Activated T-helper 2 cell treated with anti-CD3 and anti-CD28 coated beads, Interferon-gamma antibody, Interleukin-2, Interleukin-4, amounts not matched to agents 10 μg/mL and 5 μg/mL and 100 μg/mL, durations not matched to agents 14 hours and 24 hours and 36 hours (primary cell): ENCODE measurements at regions of chr12 and their contacts with region 1.

Region 1: DNA sequence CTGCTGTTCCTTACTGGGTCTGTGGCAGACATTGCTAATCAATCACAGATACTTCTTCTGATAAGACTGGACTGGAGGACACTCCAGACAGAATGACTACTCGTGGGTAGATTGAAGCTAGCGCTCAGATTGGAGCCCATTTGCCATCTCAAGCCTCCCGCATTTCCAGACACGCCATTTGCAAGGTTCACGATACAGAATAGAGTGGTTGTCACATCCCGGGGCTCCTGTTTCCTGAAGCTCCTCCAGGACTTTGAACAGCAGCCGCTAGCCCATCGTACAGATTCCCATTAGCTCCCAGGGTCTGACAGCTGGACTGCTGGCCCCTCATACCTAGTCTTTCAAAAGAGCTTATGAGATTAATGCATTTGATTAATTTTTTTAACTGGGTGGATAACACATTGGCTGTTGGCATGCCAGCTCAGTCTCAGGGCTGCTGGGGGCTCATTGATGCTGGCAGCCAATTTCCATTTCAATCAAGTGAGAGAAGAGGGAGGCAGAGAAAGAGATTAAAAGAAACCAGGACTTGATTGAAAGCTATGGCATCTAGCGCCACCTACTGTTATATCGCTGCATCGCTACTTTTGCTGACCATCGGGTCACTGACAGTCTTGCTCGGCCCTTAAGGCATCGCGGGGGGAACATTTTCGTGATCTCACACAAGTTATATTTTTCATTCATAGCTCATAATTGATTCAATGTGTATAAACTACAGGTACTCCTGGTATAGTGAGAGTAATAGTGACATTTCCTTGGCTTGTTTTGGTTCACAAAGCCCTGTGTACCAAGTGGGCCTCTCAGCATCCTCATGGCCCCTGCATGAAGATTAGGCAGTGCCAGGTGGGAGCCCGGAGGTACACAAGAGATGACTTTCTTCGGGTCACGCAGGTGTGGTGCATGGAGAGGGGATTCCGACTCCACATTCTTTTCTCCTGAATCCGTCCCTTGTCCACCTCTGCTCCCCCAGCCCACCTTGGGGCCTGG is 78.6 kb downstream of the CCDC60 start:
- DNase-seq: peak; percentile 16
- H3K4me3 Mint-ChIP-seq: no peak overlapping the region
- H3K27ac Mint-ChIP-seq: no peak overlapping the region
- H3K4me1 Mint-ChIP-seq: no peaks in the 10 kb centered on the region
- H3K27me3 Mint-ChIP-seq: peaks cover 3% of the 10 kb centered on the region

Region 2: DNA sequence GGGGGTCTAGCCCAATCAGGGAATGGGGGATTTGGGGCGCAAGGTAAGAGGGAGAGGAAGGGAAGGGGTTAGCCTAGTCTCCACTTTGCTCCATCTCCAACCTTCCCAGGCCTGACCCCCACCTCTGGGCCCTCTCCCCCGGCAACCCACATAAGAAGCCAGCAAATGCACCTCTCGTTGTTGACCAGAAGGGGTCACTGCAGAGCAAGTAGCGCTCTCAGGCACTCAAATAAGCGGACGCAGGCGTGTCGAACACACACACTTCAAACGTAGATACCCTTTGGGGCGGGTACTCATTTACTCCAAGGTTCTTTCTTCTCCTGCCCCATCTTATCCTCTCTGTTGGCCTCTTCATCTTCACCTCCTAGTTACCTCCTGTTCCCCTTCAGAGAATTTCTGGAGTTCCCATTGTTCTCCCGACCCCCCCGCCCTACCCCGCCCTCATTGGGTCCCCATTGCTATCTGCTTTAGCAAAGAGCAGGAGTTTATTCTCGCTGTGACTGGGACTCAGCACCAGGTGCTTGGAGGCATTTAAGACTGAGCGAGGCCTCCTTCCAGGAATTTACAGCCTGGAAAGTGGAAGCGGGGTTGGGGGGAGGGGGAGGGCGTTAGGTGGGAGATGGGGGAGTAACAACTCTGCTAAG is 433.2 kb before region 1 on chr12:
- intact Hi-C with region 1: loop called (anchors 5 kb)
- DNase-seq: peak; percentile 11
- H3K4me3 Mint-ChIP-seq: no peak overlapping the region
- H3K27ac Mint-ChIP-seq: no peak overlapping the region
- H3K4me1 Mint-ChIP-seq: no peaks in the 10 kb centered on the region
- H3K27me3 Mint-ChIP-seq: peaks cover 18% of the 10 kb centered on the region

Region 3: DNA sequence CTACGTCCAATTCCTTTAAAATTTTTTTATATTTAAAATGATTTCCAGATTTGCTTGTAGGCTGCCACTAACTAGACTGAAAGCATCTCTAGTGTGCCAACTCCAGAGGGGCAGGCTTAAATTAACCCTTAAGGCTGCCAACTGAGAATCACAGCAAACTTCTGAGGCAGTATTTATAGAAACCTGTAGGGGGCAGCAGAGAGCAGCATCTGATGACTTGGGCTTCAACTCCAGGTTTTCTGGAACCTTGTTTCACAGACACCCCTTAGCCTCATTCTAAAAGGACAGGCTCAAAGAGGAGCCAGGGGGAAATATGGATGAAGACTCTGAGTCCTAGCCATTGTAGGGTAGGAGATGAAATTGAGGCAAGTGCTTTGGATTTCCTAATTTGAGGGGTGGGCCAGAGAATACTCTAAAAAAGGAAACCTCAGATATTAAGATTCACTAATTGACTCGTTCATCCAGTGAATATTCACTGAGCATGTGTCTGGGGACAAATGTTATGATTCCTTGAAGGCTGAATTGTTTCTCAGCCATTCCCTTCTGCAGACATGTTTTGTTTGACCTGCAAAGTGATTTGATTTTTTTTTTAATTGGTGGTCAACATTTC is 297.7 kb before region 1 on chr12:
- intact Hi-C with region 1: loop called (anchors 1 kb)
- DNase-seq: no peak
- H3K4me3 Mint-ChIP-seq: no peak overlapping the region
- H3K27ac Mint-ChIP-seq: no peak overlapping the region
- H3K4me1 Mint-ChIP-seq: no peaks in the 10 kb centered on the region
- H3K27me3 Mint-ChIP-seq: no peaks in the 10 kb centered on the region